Naive thymus-derived CD4-positive, alpha-beta T cell (primary cell): ENCODE measurements at regions of chr10 and their contacts with region 1.

Region 1: GRCh38 chr10:91797874-91798648 is at the start of gene TNKS2:
- DNase-seq: peak; percentile 86 to 97 (median 92)
- ATAC-seq: peak; percentile 87
- H3K4me3 ChIP-seq: peak within 1 kb of the TSS; percentile 87
- H3K4me3 Mint-ChIP-seq: peak within 1 kb of the TSS; percentile 95 to 100 (median 98)
- H3K27ac ChIP-seq: peak within 1 kb of the TSS; percentile 92
- H3K27ac Mint-ChIP-seq: peak within 1 kb of the TSS; percentile 92 to 100 (median 96)
- H3K4me1 ChIP-seq: peaks cover 26 to 37% of the 10 kb centered on the region in 2 donors
- H3K4me1 Mint-ChIP-seq: peaks cover 37 to 73% (median 69%) of the 10 kb centered on the region in 7 donors
- H3K27me3 ChIP-seq: no peaks in the 10 kb centered on the region
- H3K27me3 Mint-ChIP-seq: no peaks in the 10 kb centered on the region
- total RNA-seq, gene TNKS2: 35.0 to 57.3 (median 41.5) TPM

Region 2: DNA sequence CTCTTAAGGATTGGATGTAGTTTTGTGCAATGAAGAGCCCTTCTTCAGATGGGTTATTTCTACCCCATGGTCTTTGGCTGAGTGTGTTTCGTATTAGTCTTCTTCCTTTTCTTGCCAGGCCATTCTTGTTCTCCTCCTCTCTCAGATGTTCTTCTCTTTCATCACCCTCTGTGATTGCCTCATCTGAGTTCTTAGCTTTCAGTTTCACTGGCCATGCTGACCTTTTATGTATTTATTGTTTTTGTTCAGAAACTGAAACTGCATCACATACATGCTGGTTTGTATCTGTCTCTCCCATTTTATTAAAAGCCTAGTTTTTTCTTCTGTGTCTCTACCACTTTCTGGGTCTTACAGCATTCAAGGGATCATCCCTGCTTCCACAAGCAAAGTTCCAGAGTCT is 599.3 kb before region 1 on chr10:
- CTCF ChIA-PET with region 1: no interaction called
- POLR2A ChIA-PET with region 1: no interaction called
- intact Hi-C with region 1: loop called in 1 of 2 experiments (anchors 5 kb)
- DNase-seq: peak in 5 of 9 donors; percentile 21 to 45 (median 28)
- ATAC-seq: peak; percentile 55
- H3K4me3 ChIP-seq: no peak overlapping the region
- H3K4me3 Mint-ChIP-seq: peak overlapping the region in 8 of 10 donors; percentile 9 to 82 (median 54)
- H3K27ac ChIP-seq: peak overlapping the region; percentile 59
- H3K27ac Mint-ChIP-seq: peak overlapping the region; percentile 44 to 94 (median 86)
- H3K4me1 ChIP-seq: peaks cover 55 to 57% of the 10 kb centered on the region in 2 donors
- H3K4me1 Mint-ChIP-seq: peaks cover 55 to 91% (median 86%) of the 10 kb centered on the region in 7 donors
- H3K27me3 ChIP-seq: no peaks in the 10 kb centered on the region
- H3K27me3 Mint-ChIP-seq: no peaks in the 10 kb centered on the region

Region 3: DNA sequence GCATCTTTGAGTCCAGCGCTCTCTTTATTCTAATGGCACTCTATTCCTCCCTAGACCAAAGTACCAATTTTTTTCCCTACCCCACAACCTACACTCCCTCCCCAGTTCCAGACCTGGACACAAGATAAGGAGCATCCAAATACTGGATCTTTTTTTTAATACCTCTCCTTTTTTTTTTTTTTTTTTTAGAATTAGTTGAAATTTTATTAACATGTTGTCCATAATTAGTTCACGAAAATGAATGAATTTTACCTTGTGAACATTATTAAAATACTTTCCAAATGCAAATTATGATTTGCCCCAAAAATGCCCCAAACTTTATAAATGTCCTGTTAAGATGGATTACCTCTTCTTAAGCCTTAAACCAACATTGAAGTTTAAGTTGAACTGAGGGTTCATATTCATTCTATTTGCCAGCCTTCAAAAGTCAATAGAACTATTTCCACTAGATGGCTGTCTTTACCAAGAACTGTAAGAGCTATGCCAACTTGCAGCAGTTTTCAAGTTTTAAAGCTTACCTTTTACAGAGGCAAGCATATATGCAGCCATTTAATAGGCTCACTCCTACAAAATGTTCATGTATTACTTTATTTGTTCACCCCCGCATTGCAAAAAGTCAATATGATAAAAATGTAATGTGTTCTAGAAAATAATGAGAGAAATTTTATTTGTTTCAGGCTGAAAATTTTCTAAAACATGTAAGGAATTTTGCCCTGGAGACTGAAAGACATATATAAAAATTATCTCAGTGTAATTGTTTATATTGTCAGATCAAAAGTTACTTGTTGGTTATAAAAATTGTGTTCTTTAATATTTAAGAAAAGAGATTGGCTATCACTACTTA is 39.5 kb before region 1 on chr10:
- CTCF ChIA-PET with region 1: interaction called, 7 read pairs
- POLR2A ChIA-PET with region 1: interaction called, 3 read pairs
- intact Hi-C with region 1: loop called (anchors 1 to 2 kb)
- DNase-seq: peak in 7 of 9 donors; percentile 28 to 69 (median 56)
- ATAC-seq: peak; percentile 81
- H3K4me3 ChIP-seq: no peak overlapping the region
- H3K4me3 Mint-ChIP-seq: no peak overlapping the region
- H3K27ac ChIP-seq: no peak overlapping the region
- H3K27ac Mint-ChIP-seq: no peak overlapping the region
- H3K4me1 ChIP-seq: no peaks in the 10 kb centered on the region
- H3K4me1 Mint-ChIP-seq: peaks cover 0 to 11% (median 7%) of the 10 kb centered on the region in 7 donors
- H3K27me3 ChIP-seq: no peaks in the 10 kb centered on the region
- H3K27me3 Mint-ChIP-seq: peaks cover 0 to 56% (median 19%) of the 10 kb centered on the region in 5 donors

Region 4: GRCh38 chr10:91887272-91888076 is 89.4 kb after region 1 on chr10:
- CTCF ChIA-PET with region 1: no interaction called
- POLR2A ChIA-PET with region 1: interaction called, 3 read pairs
- intact Hi-C with region 1: loop called in 1 of 2 experiments (anchors 1 kb)
- DNase-seq: peak in 6 of 9 donors; percentile 11 to 40 (median 22)
- ATAC-seq: peak; percentile 71
- H3K4me3 ChIP-seq: peak overlapping the region; percentile 45
- H3K4me3 Mint-ChIP-seq: peak overlapping the region; percentile 79 to 96 (median 91)
- H3K27ac ChIP-seq: peak overlapping the region; percentile 22
- H3K27ac Mint-ChIP-seq: peak overlapping the region in 6 of 9 donors; percentile 22 to 81 (median 64)
- H3K4me1 ChIP-seq: peaks cover 0 to 5% of the 10 kb centered on the region in 2 donors
- H3K4me1 Mint-ChIP-seq: peaks cover 0 to 16% (median 7%) of the 10 kb centered on the region in 7 donors
- H3K27me3 ChIP-seq: peaks cover 0 to 3% of the 10 kb centered on the region in 2 donors
- H3K27me3 Mint-ChIP-seq: peaks cover 6 to 57% (median 19%) of the 10 kb centered on the region in 5 donors

Region 5: DNA sequence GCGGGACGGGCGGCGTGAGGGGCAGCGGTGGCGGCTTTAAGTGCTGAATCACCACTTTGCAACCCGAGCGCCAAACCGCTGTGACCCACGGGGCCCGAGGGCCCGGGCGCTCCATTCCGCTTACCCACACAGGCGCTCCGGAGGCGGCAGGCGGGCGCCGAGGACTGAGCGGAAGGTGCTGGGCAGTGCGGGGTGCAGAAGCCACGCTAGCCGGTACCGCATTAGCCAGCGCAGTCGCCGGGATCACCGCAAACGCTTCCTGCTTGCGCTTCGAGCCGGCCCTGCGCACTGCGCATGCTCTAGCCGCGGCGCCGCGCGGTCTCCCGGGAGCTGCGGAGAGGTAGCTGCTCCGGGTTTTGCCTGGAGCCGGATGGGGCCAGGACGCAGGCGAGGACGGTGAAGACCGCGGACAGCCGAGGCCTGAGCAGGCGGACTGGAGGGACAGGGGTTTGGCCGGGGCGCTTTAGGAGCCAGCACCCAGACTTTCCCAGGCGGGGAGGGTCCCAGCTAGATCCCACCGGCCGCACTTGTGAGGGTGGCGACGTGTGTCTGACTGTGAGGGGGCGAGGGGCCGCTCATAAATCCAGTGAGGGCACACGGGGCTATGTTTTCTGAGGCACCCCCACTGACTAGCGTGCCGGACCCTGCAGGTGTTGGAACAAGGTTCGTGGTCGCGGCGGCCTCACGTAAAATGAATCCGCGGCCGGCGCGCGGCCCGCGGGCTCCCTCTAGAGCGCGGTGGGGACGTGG is 775.9 kb after region 1 on chr10 and contains the start of gene IDE:
- CTCF ChIA-PET with region 1: no interaction called
- POLR2A ChIA-PET with region 1: interaction called, 3 read pairs
- intact Hi-C with region 1: loop called (anchors 5 kb)
- DNase-seq: peak; percentile 70 to 89 (median 77)
- ATAC-seq: peak; percentile 88
- H3K4me3 ChIP-seq: peak within 1 kb of the TSS; percentile 90
- H3K4me3 Mint-ChIP-seq: peak within 1 kb of the TSS; percentile 78 to 94 (median 88)
- H3K27ac ChIP-seq: peak within 1 kb of the TSS; percentile 83
- H3K27ac Mint-ChIP-seq: peak within 1 kb of the TSS; percentile 78 to 95 (median 89)
- H3K4me1 ChIP-seq: peaks cover 12 to 14% of the 10 kb centered on the region in 2 donors
- H3K4me1 Mint-ChIP-seq: peaks cover 27 to 39% (median 38%) of the 10 kb centered on the region in 7 donors
- H3K27me3 ChIP-seq: no peaks in the 10 kb centered on the region
- H3K27me3 Mint-ChIP-seq: no peaks in the 10 kb centered on the region
- total RNA-seq, gene IDE: 20.7 to 36.7 (median 28.4) TPM

Region 6: DNA sequence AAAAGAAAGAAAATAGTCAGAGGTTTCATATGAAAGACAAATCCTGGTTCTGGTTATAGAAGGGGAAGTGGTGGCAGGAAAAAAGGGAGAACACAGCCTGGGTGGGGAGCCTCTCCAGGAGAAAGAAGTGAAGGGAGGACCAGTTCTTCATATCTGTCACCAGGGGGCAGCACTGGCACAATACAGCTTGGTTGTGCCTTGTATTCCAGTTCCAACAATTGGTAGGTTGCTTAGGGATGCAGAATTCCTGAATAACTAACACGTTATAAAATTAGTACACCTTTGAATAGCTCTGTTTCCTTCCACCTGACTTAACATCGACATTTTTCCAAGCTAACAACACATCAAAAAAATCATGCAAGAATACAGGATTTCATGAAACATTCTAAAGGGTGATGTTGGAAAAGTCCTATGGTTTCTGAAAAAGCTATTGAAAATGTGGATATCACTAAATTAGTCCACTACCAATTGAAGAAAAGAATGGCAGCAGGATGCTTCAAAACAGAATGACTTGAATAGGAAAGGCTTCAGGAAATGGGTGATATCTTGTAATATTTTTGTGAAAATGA is 1328.5 kb after region 1 on chr10:
- CTCF ChIA-PET with region 1: no interaction called
- POLR2A ChIA-PET with region 1: no interaction called
- intact Hi-C with region 1: loop called in 1 of 2 experiments (anchors 10 kb)
- DNase-seq: no peak
- ATAC-seq: no peak
- H3K4me3 ChIP-seq: no peak overlapping the region
- H3K4me3 Mint-ChIP-seq: no peak overlapping the region
- H3K27ac ChIP-seq: no peak overlapping the region
- H3K27ac Mint-ChIP-seq: no peak overlapping the region
- H3K4me1 ChIP-seq: peaks cover 6 to 20% of the 10 kb centered on the region in 2 donors
- H3K4me1 Mint-ChIP-seq: peaks cover 7 to 54% (median 43%) of the 10 kb centered on the region in 7 donors
- H3K27me3 ChIP-seq: no peaks in the 10 kb centered on the region
- H3K27me3 Mint-ChIP-seq: peaks cover 0 to 3% (median 0%) of the 10 kb centered on the region in 5 donors